A673 (cell line): ENCODE measurements at regions of chr12 and their contacts with region 1.

Region 1: DNA sequence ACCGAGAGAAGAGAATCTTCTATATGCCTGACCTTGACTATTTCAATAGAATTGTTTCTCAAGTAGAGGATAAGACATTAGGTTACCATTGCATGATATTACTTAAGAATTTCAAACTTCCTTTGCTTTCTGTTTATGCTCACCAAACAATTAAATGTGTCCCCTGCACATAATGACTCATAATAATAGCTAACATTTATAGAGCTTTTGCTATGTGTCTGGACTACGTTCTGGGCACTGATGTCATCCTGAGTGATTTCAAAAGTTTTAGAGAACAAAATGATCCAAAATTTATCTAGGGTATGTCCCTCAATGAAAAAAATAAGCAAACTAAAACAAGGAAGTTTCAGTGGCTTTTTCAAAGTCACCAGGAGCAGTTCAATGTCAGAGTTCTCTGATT is 38.8 kb downstream of the SLC15A5 start:
- DNase-seq: no peak
- H3K4me3 ChIP-seq: no peak overlapping the region
- H3K27ac ChIP-seq: no peak overlapping the region
- H3K4me1 ChIP-seq: no peaks in the 10 kb centered on the region
- H3K27me3 ChIP-seq: no peaks in the 10 kb centered on the region
- CTCF ChIP-seq: no peak

Region 2: GRCh38 chr12:16218934-16219751 is 19.5 kb before region 1 on chr12:
- CTCF ChIA-PET with region 1: no interaction called
- POLR2A ChIA-PET with region 1: no interaction called
- intact Hi-C with region 1: loop called (anchors 1 kb)
- DNase-seq: no peak
- H3K4me3 ChIP-seq: no peak overlapping the region
- H3K27ac ChIP-seq: no peak overlapping the region
- H3K4me1 ChIP-seq: no peaks in the 10 kb centered on the region
- H3K27me3 ChIP-seq: no peaks in the 10 kb centered on the region
- CTCF ChIP-seq: no peak

Region 3: GRCh38 chr12:16281157-16281556 is 42.5 kb after region 1 on chr12:
- CTCF ChIA-PET with region 1: no interaction called
- POLR2A ChIA-PET with region 1: no interaction called
- intact Hi-C with region 1: no loop called
- DNase-seq: no peak
- H3K4me3 ChIP-seq: no peak overlapping the region
- H3K27ac ChIP-seq: no peak overlapping the region
- H3K4me1 ChIP-seq: no peaks in the 10 kb centered on the region
- H3K27me3 ChIP-seq: no peaks in the 10 kb centered on the region
- CTCF ChIP-seq: no peak